ENCODE measurements at regions of chr10 and their contacts with region 1.

Region 1: GRCh38 chr10:57338823-57339558 is 928.7 kb downstream of the IPMK start:
- DNase-seq: peak; percentile 4
- H3K4me3 Mint-ChIP-seq: no peak overlapping the region
- H3K27ac Mint-ChIP-seq: no peak overlapping the region
- H3K4me1 Mint-ChIP-seq: no peaks in the 10 kb centered on the region
- H3K27me3 Mint-ChIP-seq: no peaks in the 10 kb centered on the region

Region 2: GRCh38 chr10:57593983-57594573 is 255.1 kb after region 1 on chr10:
- CTCF ChIA-PET with region 1: no interaction called
- intact Hi-C with region 1: loop called (anchors 5 kb)
- DNase-seq: no peak
- H3K4me3 Mint-ChIP-seq: no peak overlapping the region
- H3K27ac Mint-ChIP-seq: no peak overlapping the region
- H3K4me1 Mint-ChIP-seq: no peaks in the 10 kb centered on the region
- H3K27me3 Mint-ChIP-seq: no peaks in the 10 kb centered on the region

Region 3: DNA sequence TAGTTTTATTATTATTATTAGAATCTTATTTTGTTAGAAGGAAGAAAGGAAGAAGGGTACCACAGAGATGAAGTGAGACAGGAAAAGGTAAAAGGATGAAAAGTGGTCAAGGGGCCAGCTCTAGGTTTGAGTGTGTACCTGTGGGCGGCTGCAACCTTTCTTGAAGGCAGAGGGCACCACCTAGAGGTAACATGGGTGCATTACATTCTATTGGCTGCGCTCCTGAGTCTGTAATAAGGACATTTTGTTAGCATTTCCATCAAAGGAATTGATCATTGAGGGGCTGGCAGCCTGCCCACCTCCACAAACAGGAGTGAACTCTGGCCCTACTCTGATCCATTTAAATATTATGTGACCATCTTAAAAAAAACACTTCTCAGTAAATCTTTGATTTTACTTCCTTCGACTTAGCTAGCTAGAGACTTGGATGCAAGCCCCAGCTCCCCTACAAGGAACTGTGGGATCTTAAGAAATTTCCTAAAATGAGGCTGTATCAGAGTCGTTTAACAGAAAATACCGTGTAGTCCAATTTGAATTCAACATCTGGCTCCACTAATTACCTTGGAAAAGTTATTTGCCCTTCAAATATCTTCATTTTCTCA is 318.3 kb after region 1 on chr10:
- CTCF ChIA-PET with region 1: interaction called, 4 read pairs
- intact Hi-C with region 1: loop called (anchors 1 kb)
- DNase-seq: peak; percentile 47
- H3K4me3 Mint-ChIP-seq: no peak overlapping the region
- H3K27ac Mint-ChIP-seq: no peak overlapping the region
- H3K4me1 Mint-ChIP-seq: no peaks in the 10 kb centered on the region
- H3K27me3 Mint-ChIP-seq: no peaks in the 10 kb centered on the region

Region 4: DNA sequence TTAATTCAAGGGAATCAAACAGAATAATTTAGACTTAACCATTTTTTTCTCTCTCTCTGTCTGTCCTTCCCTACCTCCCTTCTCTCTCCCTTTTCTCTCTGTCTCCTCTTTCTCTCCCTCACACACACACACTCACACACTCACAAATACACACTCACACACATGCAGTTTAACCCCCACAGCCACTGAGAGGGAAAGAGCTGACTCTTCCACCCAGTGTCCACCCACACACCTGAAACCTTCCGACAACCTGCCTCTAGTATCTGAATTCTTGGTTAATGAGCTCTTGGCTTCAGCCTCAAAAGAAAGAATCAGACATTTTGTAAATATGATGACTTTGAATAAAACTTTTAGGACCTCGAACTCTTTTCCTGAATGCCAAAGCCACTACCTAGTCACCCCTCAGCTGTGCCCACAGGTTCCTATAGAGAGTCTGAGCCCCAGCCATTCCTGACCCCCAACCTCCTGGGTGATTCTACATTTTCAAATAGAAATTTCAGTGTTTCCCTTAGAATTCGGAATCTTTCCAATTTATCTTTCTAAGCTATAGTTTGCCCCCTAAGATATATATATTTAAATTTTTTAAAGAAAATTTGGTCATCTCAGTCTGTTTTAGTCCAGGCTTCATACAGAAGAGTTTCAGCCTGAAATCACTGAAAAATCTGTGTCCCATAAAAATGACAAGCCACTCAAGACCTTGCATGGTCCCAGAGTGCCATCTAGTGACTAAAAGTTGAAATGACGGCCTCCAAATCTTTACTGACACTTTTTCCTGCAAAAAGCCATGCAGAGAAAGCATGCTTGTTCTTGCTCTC is 725.9 kb after region 1 on chr10:
- CTCF ChIA-PET with region 1: no interaction called
- intact Hi-C with region 1: loop called (anchors 5 kb)
- DNase-seq: peak; percentile 10
- H3K4me3 Mint-ChIP-seq: no peak overlapping the region
- H3K27ac Mint-ChIP-seq: no peak overlapping the region
- H3K4me1 Mint-ChIP-seq: no peaks in the 10 kb centered on the region
- H3K27me3 Mint-ChIP-seq: peaks cover 16% of the 10 kb centered on the region

Measured in activated naive CD4-positive, alpha-beta T cell treated with anti-CD3 and anti-CD28 coated beads for 36 hours (primary cell).